Right lobe of liver (tissue), 6 donors: ENCODE measurements at regions of chr2 and their contacts with region 1.

Region 1: DNA sequence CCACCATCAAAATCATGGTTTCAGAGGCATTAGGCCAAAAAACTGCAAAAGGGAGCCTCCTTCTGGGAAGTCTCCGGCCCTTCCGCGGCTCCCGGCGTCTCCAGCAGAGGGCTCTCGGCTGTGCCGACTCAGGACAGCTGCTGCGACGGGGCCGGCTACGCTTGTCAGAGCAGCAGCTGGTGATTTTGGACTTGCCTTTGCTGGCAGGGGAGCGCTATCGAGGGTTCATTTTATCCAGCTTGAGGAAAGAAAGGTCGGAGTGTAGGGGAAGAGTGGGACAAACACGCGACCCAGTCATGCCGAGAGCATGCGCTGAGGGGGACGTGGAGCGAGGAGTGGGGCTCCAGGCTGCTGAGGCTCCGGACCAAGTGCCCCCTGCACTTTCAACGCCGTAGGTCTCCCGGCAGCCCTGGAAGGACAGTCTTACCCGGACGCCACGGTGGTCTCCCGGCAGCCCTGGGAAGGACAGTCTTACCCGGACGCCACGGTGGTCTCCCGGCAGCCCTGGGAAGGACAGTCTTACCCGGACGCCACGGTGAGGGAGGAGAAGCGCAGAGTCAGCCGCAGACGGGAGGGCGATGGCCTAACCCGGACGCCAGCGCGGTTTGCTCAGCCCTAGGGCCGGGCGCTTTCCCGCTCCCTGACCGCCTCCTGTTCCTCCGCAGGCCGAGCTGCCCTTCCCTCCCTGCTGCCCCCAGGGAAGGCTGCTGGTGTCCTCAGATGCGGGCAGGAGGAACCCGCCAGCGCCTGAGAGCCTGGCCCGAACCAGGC is 21.7 kb downstream of the DDX18 start:
- DNase-seq: peak; percentile 87 to 91 (median 90)
- ATAC-seq: peak; percentile 98 to 99 (median 98)
- H3K4me3 ChIP-seq: peak overlapping the region; percentile 37 to 54 (median 44)
- H3K27ac ChIP-seq: peak overlapping the region in 1 of 3 donors; percentile 43
- H3K4me1 ChIP-seq: peaks cover 0 to 5% (median 0%) of the 10 kb centered on the region in 4 donors
- H3K27me3 ChIP-seq: no peaks in the 10 kb centered on the region
- CTCF ChIP-seq: peak; percentile 74 to 85 (median 82)
- POLR2A ChIP-seq: no peak

Region 2: GRCh38 chr2:117917223-117917917 is 81.2 kb after region 1 on chr2:
- intact Hi-C with region 1: loop called (anchors 10 kb)
- DNase-seq: peak in 2 of 3 donors; percentile 34 to 67
- ATAC-seq: peak; percentile 98 to 99 (median 98)
- H3K4me3 ChIP-seq: peak overlapping the region in 2 of 3 donors; percentile 15 to 30
- H3K27ac ChIP-seq: peak overlapping the region in 2 of 3 donors; percentile 72 to 76
- H3K4me1 ChIP-seq: peaks cover 0 to 6% (median 0%) of the 10 kb centered on the region in 4 donors
- H3K27me3 ChIP-seq: no peaks in the 10 kb centered on the region
- CTCF ChIP-seq: peak; percentile 51 to 77 (median 66)
- POLR2A ChIP-seq: no peak

Region 3: DNA sequence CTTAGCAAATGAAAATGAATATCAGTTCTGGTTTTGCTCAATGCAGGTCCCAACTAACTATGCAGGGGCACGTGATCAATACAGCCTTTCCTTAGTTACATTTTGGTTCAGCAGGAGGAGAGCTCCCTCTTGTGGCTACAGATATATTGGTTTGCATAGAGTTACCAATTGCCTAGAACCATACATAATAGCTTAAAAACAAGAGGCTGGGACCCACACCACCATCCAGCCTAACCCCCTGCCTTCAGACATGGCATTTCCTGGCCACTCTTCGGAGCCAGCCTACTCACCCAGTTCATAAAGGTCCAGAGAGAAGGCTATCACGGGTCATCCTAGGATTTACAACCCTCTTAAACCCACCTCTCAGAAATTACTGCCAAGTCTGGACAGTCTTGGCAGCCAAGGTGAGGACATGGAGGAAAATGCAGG is 167.2 kb after region 1 on chr2:
- intact Hi-C with region 1: loop called (anchors 10 kb)
- DNase-seq: peak in 1 of 3 donors; percentile 55
- ATAC-seq: peak; percentile 98 to 100 (median 100)
- H3K4me3 ChIP-seq: no peak overlapping the region
- H3K27ac ChIP-seq: no peak overlapping the region
- H3K4me1 ChIP-seq: no peaks in the 10 kb centered on the region
- H3K27me3 ChIP-seq: no peaks in the 10 kb centered on the region
- CTCF ChIP-seq: peak; percentile 80 to 89 (median 86)
- POLR2A ChIP-seq: no peak